MCF 10A (cell line): ENCODE measurements at regions of chr7 and their contacts with region 1.

Region 1: GRCh38 chr7:105268511-105269392 is 120.0 kb downstream of the SRPK2 start:
- DNase-seq: peak; percentile 63
- H3K4me3 Mint-ChIP-seq: peak overlapping the region; percentile 85
- H3K27ac Mint-ChIP-seq: peak overlapping the region; percentile 98
- H3K4me1 Mint-ChIP-seq: peaks cover 26% of the 10 kb centered on the region
- H3K27me3 Mint-ChIP-seq: no peaks in the 10 kb centered on the region
- CTCF ChIP-seq: no peak

Region 2: DNA sequence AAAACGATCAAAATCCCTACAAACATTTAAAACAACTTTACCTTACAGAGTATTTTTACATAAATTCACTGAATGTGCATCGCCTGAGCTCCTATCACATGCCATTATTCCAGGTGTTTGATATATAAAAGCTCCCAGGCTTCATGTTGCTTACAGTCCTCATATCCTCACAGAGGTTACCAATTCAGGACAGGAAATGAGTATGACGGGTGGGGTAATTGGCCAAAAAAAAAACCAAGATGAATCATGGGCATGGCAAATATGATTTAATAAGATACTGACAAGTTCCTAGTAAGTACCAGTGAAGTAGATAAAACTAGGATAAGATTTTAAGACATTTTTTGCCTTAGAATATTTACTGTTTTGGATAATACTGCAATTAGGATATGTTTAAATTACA is 118.9 kb before region 1 on chr7:
- CTCF ChIA-PET with region 1: interaction called, 3 read pairs
- POLR2A ChIA-PET with region 1: interaction called, 5 read pairs
- intact Hi-C with region 1: loop called (anchors 5 kb)
- DNase-seq: peak; percentile 69
- H3K4me3 Mint-ChIP-seq: no peak overlapping the region
- H3K27ac Mint-ChIP-seq: peak overlapping the region; percentile 87
- H3K4me1 Mint-ChIP-seq: peaks cover 6% of the 10 kb centered on the region
- H3K27me3 Mint-ChIP-seq: no peaks in the 10 kb centered on the region
- CTCF ChIP-seq: no peak

Region 3: DNA sequence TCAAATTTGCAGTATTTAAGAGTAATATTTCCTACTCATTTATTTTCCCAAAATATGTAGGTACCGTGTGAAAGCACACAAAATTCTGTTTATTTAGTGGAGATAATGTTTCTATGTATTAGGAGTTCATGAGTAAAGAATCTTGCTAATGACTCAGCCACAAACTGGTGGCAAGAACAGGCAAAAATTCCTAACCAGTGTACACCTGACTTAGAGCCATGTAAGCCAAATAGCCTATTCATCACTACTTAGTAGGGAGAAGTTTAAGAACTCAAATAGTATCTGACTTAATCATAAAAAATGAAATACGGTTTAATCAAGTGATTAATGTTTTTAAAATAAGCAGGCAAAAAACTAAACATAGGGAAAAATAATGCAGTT is 49.0 kb before region 1 on chr7:
- CTCF ChIA-PET with region 1: no interaction called
- POLR2A ChIA-PET with region 1: interaction called, 45 read pairs
- intact Hi-C with region 1: no loop called
- DNase-seq: peak; percentile 71
- H3K4me3 Mint-ChIP-seq: peak overlapping the region; percentile 50
- H3K27ac Mint-ChIP-seq: peak overlapping the region; percentile 65
- H3K4me1 Mint-ChIP-seq: peaks cover 51% of the 10 kb centered on the region
- H3K27me3 Mint-ChIP-seq: no peaks in the 10 kb centered on the region
- CTCF ChIP-seq: no peak

Region 4: GRCh38 chr7:105249216-105249615 is 19.5 kb before region 1 on chr7:
- CTCF ChIA-PET with region 1: interaction called, 7 read pairs
- POLR2A ChIA-PET with region 1: interaction called, 22 read pairs
- intact Hi-C with region 1: no loop called
- DNase-seq: no peak
- H3K4me3 Mint-ChIP-seq: no peak overlapping the region
- H3K27ac Mint-ChIP-seq: no peak overlapping the region
- H3K4me1 Mint-ChIP-seq: peaks cover 12% of the 10 kb centered on the region
- H3K27me3 Mint-ChIP-seq: no peaks in the 10 kb centered on the region
- CTCF ChIP-seq: no peak

Region 5: DNA sequence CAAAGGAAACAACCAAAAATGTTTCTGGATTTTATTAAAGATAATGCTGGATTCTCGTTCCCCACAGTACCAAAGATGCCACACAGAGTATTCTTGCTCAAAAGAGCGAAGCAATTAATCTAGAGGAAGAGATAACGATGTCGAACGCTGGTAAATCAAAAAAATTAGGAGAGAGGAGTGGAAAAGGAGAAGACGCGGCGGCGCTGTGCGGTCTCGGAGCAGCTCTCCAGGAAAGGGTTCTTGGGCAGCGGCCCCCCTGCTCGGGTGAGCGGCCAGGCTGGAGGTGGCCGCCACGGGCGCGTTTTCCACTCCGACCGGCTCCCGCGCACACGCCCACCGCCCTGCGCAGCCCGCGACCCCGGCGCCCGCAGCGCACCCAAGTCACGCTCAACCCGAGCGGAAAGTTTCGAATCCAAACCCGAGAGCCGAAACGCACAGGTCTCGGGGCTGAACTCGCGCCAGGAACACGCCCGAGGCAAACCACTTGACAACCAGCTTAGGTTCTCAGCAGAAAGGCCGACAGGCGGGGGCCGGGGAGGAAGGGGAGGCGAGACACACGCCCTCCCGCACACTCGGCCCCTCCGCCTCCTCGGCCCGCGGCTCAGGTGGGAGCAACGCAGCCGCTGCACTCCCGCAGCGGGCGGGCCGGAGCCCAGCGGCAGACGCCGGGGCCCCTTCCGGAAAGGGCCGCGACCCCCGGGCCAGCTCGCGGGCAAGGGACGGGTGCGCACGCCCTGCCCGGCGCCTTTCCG is 119.0 kb after region 1 on chr7:
- CTCF ChIA-PET with region 1: no interaction called
- POLR2A ChIA-PET with region 1: interaction called, 13 read pairs
- intact Hi-C with region 1: no loop called
- DNase-seq: peak; percentile 72
- H3K4me3 Mint-ChIP-seq: peak overlapping the region; percentile 82
- H3K27ac Mint-ChIP-seq: peak overlapping the region; percentile 63
- H3K4me1 Mint-ChIP-seq: no peaks in the 10 kb centered on the region
- H3K27me3 Mint-ChIP-seq: no peaks in the 10 kb centered on the region
- CTCF ChIP-seq: no peak

Region 6: DNA sequence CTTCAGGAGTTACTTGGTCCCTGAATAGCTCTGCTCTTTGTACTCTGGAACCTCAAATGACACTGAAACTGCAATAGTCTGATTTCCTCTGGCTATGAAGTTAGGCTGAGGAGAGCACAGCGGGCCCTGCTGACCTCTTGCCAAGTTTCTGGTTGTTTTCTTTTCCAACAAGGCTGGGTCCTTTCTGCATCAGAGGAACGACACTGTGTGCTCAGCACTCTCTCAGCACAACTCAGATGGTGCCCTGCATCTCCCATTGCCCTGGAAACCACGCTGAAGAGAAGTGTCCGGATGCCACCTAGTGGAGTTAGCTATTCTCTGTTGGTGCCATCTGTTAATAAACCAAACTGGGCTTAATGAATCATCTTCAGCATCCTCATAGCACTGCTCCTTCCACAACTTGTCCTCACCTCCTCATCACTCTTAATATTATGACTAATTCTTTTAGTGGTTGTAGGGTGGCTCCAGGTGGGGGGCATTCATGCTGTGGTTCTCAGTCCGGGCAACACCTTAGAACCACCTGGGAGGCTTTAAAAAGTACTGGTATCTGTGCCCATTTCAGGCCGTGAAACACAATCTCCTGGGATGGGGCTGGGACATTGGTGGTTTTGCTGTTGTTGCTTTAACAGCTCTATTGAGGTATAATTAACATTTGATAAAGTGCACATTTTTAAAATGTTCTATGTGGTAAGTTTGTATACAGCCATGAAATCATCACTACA is 320.8 kb after region 1 on chr7:
- CTCF ChIA-PET with region 1: no interaction called
- POLR2A ChIA-PET with region 1: no interaction called
- intact Hi-C with region 1: no loop called
- DNase-seq: peak; percentile 83
- H3K4me3 Mint-ChIP-seq: no peak overlapping the region
- H3K27ac Mint-ChIP-seq: no peak overlapping the region
- H3K4me1 Mint-ChIP-seq: no peaks in the 10 kb centered on the region
- H3K27me3 Mint-ChIP-seq: no peaks in the 10 kb centered on the region
- CTCF ChIP-seq: peak; percentile 58

Region 7: GRCh38 chr7:105652359-105652993 is 383.7 kb after region 1 on chr7:
- CTCF ChIA-PET with region 1: no interaction called
- POLR2A ChIA-PET with region 1: no interaction called
- intact Hi-C with region 1: no loop called
- DNase-seq: peak; percentile 62
- H3K4me3 Mint-ChIP-seq: no peak overlapping the region
- H3K27ac Mint-ChIP-seq: no peak overlapping the region
- H3K4me1 Mint-ChIP-seq: peaks cover 10% of the 10 kb centered on the region
- H3K27me3 Mint-ChIP-seq: no peaks in the 10 kb centered on the region
- CTCF ChIP-seq: peak; percentile 79